CD4-positive, alpha-beta T cell (primary cell): ENCODE measurements at regions of chr4 and their contacts with region 1.

Region 1: DNA sequence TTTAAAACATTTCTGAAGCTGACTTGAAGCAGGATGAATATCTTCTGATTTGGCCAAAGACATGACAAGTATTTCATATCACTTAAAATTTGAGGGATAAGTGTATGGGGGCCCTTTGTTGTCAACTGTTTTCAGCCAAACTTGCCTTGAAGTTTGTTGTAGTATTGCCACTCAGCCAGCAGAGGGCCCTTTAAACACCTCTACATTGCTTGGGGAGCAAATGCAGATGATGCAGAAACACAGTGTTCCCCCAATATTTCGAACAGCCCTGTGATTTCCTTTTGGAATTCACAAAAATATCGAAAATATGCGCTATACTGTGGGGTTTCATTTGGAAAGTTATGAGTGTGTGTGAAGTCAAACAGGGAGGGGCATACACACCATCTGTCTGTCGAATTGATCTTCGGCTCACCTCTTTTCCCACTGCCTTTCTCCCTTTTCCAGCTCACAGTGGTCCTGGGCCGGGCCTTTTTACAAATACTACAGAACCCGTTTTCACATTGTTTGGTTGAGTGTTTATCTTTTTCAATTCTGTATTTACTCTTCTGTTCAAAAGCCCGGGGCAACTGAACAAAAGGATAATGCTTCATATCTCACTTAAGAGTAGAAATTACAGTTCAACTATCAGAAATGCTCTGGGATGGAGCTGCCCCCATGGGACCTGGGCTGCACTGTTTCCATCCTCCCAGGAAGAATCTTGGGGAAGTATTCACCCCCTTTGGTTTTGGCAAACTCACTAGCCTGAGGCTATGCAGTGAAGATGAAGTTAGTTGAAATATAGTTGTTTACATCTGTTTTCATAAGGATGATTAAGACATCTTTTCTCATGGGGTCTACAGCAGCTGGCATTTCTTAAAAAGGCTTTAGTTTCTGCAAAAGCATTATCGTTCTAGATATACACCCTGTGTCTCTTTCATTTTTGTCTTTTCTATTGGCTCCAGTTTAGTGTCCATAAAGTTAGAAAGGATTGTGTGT is 137.6 kb downstream of the EGF start:
- DNase-seq: peak; percentile 18 to 72 (median 44)
- ATAC-seq: peak; percentile 71
- H3K4me3 ChIP-seq: no peak overlapping the region
- H3K4me3 Mint-ChIP-seq: no peak overlapping the region
- H3K27ac ChIP-seq: no peak overlapping the region
- H3K27ac Mint-ChIP-seq: no peak overlapping the region
- H3K4me1 ChIP-seq: no peaks in the 10 kb centered on the region
- H3K4me1 Mint-ChIP-seq: no peaks in the 10 kb centered on the region
- H3K27me3 ChIP-seq: no peaks in the 10 kb centered on the region
- H3K27me3 Mint-ChIP-seq: no peaks in the 10 kb centered on the region
- CTCF ChIP-seq: peak; percentile 85

Region 2: GRCh38 chr4:110211007-110211769 is 160.9 kb after region 1 on chr4:
- CTCF ChIA-PET with region 1: interaction called, 7 read pairs
- POLR2A ChIA-PET with region 1: no interaction called
- intact Hi-C with region 1: loop called (anchors 1 kb)
- DNase-seq: peak in 8 of 14 experiments; percentile 4 to 70 (median 34)
- ATAC-seq: peak; percentile 80
- H3K4me3 ChIP-seq: no peak overlapping the region
- H3K4me3 Mint-ChIP-seq: no peak overlapping the region
- H3K27ac ChIP-seq: no peak overlapping the region
- H3K27ac Mint-ChIP-seq: no peak overlapping the region
- H3K4me1 ChIP-seq: peaks cover 2% of the 10 kb centered on the region
- H3K4me1 Mint-ChIP-seq: peaks cover 4% of the 10 kb centered on the region
- H3K27me3 ChIP-seq: no peaks in the 10 kb centered on the region
- H3K27me3 Mint-ChIP-seq: peaks cover under 1% of the 10 kb centered on the region
- CTCF ChIP-seq: peak; percentile 82

Region 3: DNA sequence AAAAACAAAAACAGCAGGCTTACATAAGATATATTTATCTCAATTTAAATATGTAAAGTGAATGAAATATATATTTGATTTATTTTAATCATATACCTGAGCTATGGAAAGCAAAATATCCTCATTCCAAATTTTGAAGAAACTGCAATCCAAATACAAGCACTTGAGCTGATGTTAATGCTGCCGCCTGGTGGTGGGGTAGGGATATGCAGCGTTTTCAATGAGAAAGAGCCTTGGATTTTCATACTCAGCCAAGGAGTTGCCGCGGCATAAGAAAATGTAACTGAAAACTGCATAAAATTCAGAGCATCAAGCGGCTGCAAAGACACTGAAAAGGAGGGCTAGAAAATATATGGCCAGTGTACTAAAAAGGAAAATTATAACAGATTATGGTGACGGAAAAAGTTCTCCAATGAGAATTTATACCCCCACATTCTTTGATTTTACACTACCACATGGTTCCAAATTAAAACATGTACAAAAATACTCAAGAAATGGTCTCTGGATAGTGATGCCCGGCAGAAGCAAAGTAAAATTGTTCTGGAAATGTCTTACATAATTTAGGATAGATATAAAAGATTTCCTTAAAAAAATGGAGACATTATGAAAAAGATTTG is 1232.9 kb after region 1 on chr4:
- CTCF ChIA-PET with region 1: no interaction called
- POLR2A ChIA-PET with region 1: no interaction called
- intact Hi-C with region 1: no loop called
- DNase-seq: peak in 6 of 14 experiments; percentile 0 to 37 (median 22)
- ATAC-seq: no peak
- H3K4me3 ChIP-seq: no peak overlapping the region
- H3K4me3 Mint-ChIP-seq: no peak overlapping the region
- H3K27ac ChIP-seq: no peak overlapping the region
- H3K27ac Mint-ChIP-seq: no peak overlapping the region
- H3K4me1 ChIP-seq: no peaks in the 10 kb centered on the region
- H3K4me1 Mint-ChIP-seq: no peaks in the 10 kb centered on the region
- H3K27me3 ChIP-seq: no peaks in the 10 kb centered on the region
- H3K27me3 Mint-ChIP-seq: no peaks in the 10 kb centered on the region
- CTCF ChIP-seq: peak; percentile 44